ENCODE measurements at regions of chr7 and their contacts with region 1.

Region 1: DNA sequence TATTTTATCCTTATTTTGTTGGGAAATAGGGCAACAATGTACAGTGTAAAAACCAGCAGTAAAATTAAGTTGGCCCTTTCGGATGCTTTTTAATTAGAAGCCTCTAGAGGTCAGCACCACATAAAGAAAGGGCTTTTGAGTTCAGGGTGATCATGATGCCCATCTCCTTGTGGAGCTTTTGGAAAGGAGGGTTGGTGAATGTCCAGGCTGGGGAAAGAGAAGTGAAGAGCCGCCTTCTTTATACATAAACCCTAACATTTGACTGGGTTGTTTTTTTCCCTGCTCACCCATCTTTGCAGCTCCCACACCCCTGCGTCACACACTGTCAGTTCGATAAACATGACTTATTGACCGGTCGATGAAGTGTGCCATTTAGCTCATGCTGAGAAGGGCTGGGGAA is 29.8 kb downstream of the MTURN start:
- DNase-seq: no peak
- ATAC-seq: peak; percentile 74
- H3K4me3 ChIP-seq: no peak overlapping the region
- H3K27ac ChIP-seq: no peak overlapping the region
- H3K4me1 ChIP-seq: no peaks in the 10 kb centered on the region
- H3K27me3 ChIP-seq: no peaks in the 10 kb centered on the region

Region 2: GRCh38 chr7:30026229-30027064 is 138.1 kb before region 1 on chr7 and contains the start of gene FKBP14:
- intact Hi-C with region 1: no loop called
- DNase-seq: peak; percentile 98
- ATAC-seq: peak; percentile 96
- H3K4me3 ChIP-seq: peak within 1 kb of the TSS; percentile 97 to 99
- H3K27ac ChIP-seq: peak within 1 kb of the TSS; percentile 19 to 64
- H3K4me1 ChIP-seq: peaks cover 7% of the 10 kb centered on the region in 2 donors
- H3K27me3 ChIP-seq: no peaks in the 10 kb centered on the region
- total RNA-seq, gene FKBP14: 23.8 to 25.9 TPM

Region 3: DNA sequence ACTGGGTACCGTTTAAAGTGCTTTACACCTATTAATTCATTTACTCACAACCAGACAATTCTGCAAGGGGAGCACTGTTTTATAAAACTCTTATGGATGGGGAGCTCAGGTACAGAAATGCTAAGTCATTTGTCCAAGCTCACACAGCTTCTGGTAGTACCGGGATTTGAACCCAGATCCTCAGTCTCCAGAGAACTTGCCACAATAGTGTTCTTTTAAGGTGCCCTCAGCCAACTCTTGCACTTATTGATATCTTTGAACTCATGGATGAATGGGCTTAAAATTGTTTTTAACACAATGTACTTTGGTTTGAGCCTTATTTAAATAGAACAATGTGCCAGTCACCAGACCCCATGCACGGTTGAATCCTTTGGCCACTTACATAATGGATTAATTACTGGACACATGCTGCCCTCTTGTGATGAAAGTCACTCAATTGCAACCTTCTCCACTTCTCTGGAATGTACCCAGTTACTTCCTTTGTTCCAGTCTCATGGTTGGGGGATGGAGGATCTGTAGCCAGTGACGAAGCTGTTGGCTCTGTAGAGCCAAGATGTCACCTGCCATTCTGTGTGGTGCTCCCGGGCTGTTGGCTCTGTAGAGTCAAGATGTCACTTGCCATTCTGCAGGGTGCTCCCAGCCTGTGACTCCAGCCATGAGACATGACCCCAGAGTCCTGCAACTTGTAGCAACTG is 248.4 kb after region 1 on chr7:
- intact Hi-C with region 1: loop called (anchors 2 kb)
- DNase-seq: no peak
- ATAC-seq: peak; percentile 83
- H3K4me3 ChIP-seq: no peak overlapping the region
- H3K27ac ChIP-seq: no peak overlapping the region
- H3K4me1 ChIP-seq: no peaks in the 10 kb centered on the region
- H3K27me3 ChIP-seq: no peaks in the 10 kb centered on the region

Measured in aorta (tissue), 5 donors.